CD8-positive, alpha-beta T cell (primary cell): ENCODE measurements at regions of chr22 and their contacts with region 1.

Region 1: GRCh38 chr22:43273902-43274484 is 69.2 kb downstream of the SCUBE1 start:
- DNase-seq: peak in 6 of 9 experiments; percentile 25 to 73 (median 46)
- ATAC-seq: peak; percentile 54
- H3K4me3 ChIP-seq: no peak overlapping the region
- H3K4me3 Mint-ChIP-seq: no peak overlapping the region
- H3K27ac ChIP-seq: no peak overlapping the region
- H3K27ac Mint-ChIP-seq: no peak overlapping the region
- H3K4me1 ChIP-seq: no peaks in the 10 kb centered on the region
- H3K4me1 Mint-ChIP-seq: no peaks in the 10 kb centered on the region
- H3K27me3 ChIP-seq: no peaks in the 10 kb centered on the region
- H3K27me3 Mint-ChIP-seq: peaks cover 2% of the 10 kb centered on the region
- CTCF ChIP-seq: peak; percentile 47

Region 2: GRCh38 chr22:43257549-43257948 is 16.4 kb before region 1 on chr22:
- CTCF ChIA-PET with region 1: interaction called, 15 read pairs
- POLR2A ChIA-PET with region 1: no interaction called
- intact Hi-C with region 1: no loop called
- DNase-seq: no peak
- ATAC-seq: no peak
- H3K4me3 ChIP-seq: no peak overlapping the region
- H3K4me3 Mint-ChIP-seq: no peak overlapping the region
- H3K27ac ChIP-seq: no peak overlapping the region
- H3K27ac Mint-ChIP-seq: no peak overlapping the region
- H3K4me1 ChIP-seq: peaks cover 6% of the 10 kb centered on the region
- H3K4me1 Mint-ChIP-seq: peaks cover 12% of the 10 kb centered on the region
- H3K27me3 ChIP-seq: no peaks in the 10 kb centered on the region
- H3K27me3 Mint-ChIP-seq: peaks cover 8% of the 10 kb centered on the region
- CTCF ChIP-seq: no peak

Region 3: DNA sequence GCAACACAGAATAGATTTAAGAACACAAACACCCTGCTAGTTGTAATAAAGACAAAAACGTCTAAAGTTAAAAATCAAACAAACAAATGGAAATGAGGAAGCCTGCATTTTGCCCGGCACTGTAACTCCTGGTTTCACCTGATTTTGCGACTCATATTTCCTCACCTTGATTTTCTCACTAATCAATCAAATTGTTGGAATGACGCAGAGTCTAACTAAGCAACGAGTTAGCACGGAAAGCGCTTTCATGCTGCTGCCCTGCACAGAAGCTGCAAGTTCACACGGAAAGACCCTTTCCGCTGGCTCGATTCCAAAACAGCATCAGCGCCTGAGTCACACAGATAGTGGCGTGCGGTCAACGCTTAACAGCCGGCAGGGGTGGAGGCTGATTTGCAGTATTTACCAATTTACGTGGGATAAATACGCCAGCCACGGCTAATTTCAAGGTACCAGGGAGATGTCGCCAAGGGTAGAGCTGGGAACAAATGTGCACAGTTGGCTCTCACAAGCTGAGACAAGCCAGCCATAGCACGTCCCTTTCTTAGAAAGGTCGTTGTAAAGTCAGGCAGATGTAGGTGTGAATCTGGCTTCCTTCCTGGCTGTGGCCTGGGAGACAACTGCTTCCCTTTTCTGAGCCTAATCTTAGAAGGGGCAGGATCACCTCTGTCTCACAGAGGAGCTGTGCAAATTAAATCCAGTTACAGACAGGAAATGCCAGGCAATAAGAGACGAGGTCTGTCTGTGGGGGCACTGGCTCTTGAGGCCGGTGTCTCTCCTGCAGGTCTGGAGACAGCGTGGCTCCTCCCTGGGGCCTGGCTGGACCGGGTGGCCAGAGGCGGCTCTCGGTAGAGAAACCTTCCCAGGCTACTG is 10.1 kb before region 1 on chr22:
- CTCF ChIA-PET with region 1: interaction called, 15 read pairs
- POLR2A ChIA-PET with region 1: no interaction called
- intact Hi-C with region 1: no loop called
- DNase-seq: peak; percentile 62 to 98 (median 85)
- ATAC-seq: peak; percentile 82
- H3K4me3 ChIP-seq: peak overlapping the region; percentile 23 to 25
- H3K4me3 Mint-ChIP-seq: peak overlapping the region; percentile 71
- H3K27ac ChIP-seq: peak overlapping the region; percentile 49 to 84
- H3K27ac Mint-ChIP-seq: peak overlapping the region; percentile 79
- H3K4me1 ChIP-seq: peaks cover 29% of the 10 kb centered on the region
- H3K4me1 Mint-ChIP-seq: peaks cover 26% of the 10 kb centered on the region
- H3K27me3 ChIP-seq: no peaks in the 10 kb centered on the region
- H3K27me3 Mint-ChIP-seq: no peaks in the 10 kb centered on the region
- CTCF ChIP-seq: no peak

Region 4: GRCh38 chr22:43356881-43357280 is 82.9 kb after region 1 on chr22:
- CTCF ChIA-PET with region 1: no interaction called
- POLR2A ChIA-PET with region 1: no interaction called
- intact Hi-C with region 1: no loop called
- DNase-seq: no peak
- ATAC-seq: no peak
- H3K4me3 ChIP-seq: no peak overlapping the region
- H3K4me3 Mint-ChIP-seq: no peak overlapping the region
- H3K27ac ChIP-seq: no peak overlapping the region
- H3K27ac Mint-ChIP-seq: no peak overlapping the region
- H3K4me1 ChIP-seq: no peaks in the 10 kb centered on the region
- H3K4me1 Mint-ChIP-seq: no peaks in the 10 kb centered on the region
- H3K27me3 ChIP-seq: no peaks in the 10 kb centered on the region
- H3K27me3 Mint-ChIP-seq: peaks cover 8% of the 10 kb centered on the region
- CTCF ChIP-seq: no peak

Region 5: GRCh38 chr22:43385770-43386641 is 112.0 kb after region 1 on chr22:
- CTCF ChIA-PET with region 1: interaction called, 7 read pairs
- POLR2A ChIA-PET with region 1: no interaction called
- intact Hi-C with region 1: loop called in 1 of 2 experiments (anchors 1 kb)
- DNase-seq: peak; percentile 46 to 85 (median 73)
- ATAC-seq: peak; percentile 82
- H3K4me3 ChIP-seq: no peak overlapping the region
- H3K4me3 Mint-ChIP-seq: no peak overlapping the region
- H3K27ac ChIP-seq: no peak overlapping the region
- H3K27ac Mint-ChIP-seq: no peak overlapping the region
- H3K4me1 ChIP-seq: peaks cover 4% of the 10 kb centered on the region
- H3K4me1 Mint-ChIP-seq: peaks cover 7% of the 10 kb centered on the region
- H3K27me3 ChIP-seq: peaks cover 7 to 14% of the 10 kb centered on the region in 2 experiments
- H3K27me3 Mint-ChIP-seq: peaks cover 18% of the 10 kb centered on the region
- CTCF ChIP-seq: peak; percentile 58

Region 6: DNA sequence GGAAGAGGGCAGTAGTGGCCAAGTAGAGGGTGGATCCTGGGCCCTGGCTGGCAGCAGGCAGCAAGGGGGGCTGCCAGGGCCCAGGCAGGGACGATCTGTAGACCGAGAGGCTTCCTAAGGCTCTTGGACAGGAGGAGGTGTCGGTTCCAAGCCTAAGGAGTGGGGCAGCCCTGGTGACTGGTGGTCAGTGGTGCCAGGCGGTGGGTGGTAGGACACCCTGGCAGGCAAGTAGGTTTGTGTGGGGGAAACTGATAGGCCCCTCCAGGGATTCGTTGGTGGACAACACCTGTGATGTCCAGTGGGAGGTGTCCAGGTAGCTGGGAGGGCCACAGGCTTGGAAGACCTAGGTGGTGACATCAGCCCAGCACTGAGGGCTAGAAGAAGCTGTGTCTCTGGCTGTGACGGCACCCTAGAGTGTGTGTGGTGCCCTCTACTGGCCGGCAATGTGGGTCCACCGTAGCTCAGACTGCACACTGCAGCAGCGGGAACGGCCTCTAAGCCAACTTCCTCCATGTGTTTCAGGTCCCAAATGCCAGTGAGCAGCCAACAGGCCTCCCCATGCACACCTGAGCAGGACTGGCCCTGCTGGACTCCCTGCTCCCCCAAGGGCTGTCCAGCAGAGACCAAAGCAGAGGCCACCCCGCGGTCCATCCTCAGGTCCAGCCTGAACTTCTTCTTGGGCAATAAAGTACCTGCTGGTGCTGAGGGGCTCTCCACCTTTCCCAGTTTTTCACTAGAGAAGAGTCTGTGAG is 671.8 kb after region 1 on chr22:
- CTCF ChIA-PET with region 1: no interaction called
- POLR2A ChIA-PET with region 1: no interaction called
- intact Hi-C with region 1: loop called in 1 of 2 experiments (anchors 10 kb)
- DNase-seq: peak; percentile 42 to 74 (median 67)
- ATAC-seq: peak; percentile 97
- H3K4me3 ChIP-seq: no peak overlapping the region
- H3K4me3 Mint-ChIP-seq: no peak overlapping the region
- H3K27ac ChIP-seq: no peak overlapping the region
- H3K27ac Mint-ChIP-seq: no peak overlapping the region
- H3K4me1 ChIP-seq: no peaks in the 10 kb centered on the region
- H3K4me1 Mint-ChIP-seq: no peaks in the 10 kb centered on the region
- H3K27me3 ChIP-seq: peaks cover 0 to 4% of the 10 kb centered on the region in 2 experiments
- H3K27me3 Mint-ChIP-seq: peaks cover 14% of the 10 kb centered on the region
- CTCF ChIP-seq: peak; percentile 73